HEK293T (cell line): ENCODE measurements at regions of chr13 and their contacts with region 1.

Region 1: GRCh38 chr13:26872525-26873385 is 112.2 kb upstream of the GPR12 start:
- DNase-seq: peak; percentile 75

Region 2: GRCh38 chr13:26887594-26887993 is 14.8 kb after region 1 on chr13:
- CTCF ChIA-PET with region 1: interaction called, 13 read pairs
- POLR2A ChIA-PET with region 1: no interaction called
- DNase-seq: no peak

Region 3: GRCh38 chr13:26977556-26977955 is 104.8 kb after region 1 on chr13:
- CTCF ChIA-PET with region 1: no interaction called
- POLR2A ChIA-PET with region 1: no interaction called
- DNase-seq: no peak

Region 4: DNA sequence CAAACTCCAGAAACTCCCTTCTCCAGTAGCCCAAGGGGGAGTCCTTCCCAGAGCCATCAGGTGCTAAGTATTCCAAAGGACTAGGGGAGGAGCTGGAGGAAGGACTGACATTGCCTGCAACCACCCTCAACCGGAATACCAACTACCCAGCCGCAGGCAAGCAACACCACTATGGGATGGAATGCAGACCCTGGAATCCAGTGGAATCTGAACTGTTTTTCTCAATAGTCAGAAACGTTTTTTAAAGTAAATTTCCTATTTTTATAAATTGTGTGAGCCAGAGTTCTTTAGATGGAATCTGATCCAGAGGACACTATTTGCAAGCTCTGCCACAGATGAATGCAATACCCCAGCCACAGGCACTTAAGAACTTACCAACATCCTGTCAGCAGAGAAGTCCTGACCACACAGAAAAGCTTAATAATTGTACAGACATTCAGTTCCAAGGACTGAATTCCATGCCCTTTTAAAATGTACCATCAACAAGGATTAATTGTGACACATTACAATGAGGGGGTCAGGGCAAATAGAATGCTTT is 206.7 kb after region 1 on chr13:
- CTCF ChIA-PET with region 1: no interaction called
- POLR2A ChIA-PET with region 1: no interaction called
- DNase-seq: no peak

Region 5: GRCh38 chr13:28611654-28612131 is 1738.9 kb after region 1 on chr13:
- CTCF ChIA-PET with region 1: no interaction called
- POLR2A ChIA-PET with region 1: no interaction called
- DNase-seq: no peak